Activated CD4-positive, alpha-beta T cell treated with anti-CD3 and anti-CD28 coated beads, Interleukin-2, amount 10 ng/mL, durations not matched to agents 24 days and 14 days (primary cell): ENCODE measurements at regions of chr2 and their contacts with region 1.

Region 1: DNA sequence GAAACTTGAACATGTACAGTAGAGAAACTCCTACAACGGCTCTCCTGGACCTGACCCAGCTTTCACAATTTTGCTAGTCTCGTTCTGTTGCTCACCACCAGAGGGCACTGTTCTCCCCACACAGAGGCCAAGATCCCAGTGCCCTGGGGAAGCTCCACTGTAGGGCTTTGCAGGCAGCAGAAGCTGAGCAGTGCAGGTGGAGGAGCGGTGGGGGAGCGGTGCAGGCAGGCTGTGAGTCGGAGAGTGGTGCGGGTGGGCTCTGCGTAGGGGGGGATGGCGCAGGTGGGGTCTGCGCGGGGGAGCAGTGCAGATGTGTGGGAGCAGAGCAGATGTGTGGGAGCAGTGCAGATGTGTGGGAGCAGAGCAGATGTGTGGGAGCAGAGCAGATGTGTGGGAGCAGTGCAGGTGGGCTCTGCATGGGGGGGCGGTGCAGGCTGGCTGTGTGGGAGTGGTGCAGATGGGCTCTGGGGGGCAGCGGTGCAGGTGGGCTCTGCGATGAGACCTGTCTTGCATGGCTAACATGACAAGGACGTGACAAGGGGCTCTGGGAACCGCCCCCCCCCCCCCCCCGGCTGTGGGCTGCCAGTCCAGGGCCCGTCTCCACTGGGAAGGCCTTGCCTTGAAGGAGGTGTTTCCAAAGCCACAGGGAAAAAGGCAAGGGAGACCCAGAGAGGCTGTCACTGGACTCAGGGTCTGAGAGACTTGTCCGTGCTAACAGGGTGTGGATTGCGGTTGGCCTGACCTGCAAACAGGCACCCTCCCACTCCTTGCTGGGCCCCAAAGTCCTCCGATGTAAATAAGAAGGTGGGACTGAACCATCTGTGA is 7.3 kb downstream of the CYS1 start:
- DNase-seq: peak; percentile 94
- H3K4me3 Mint-ChIP-seq: no peak overlapping the region
- H3K27ac Mint-ChIP-seq: peak overlapping the region; percentile 7
- H3K4me1 Mint-ChIP-seq: peaks cover 7% of the 10 kb centered on the region
- H3K27me3 Mint-ChIP-seq: peaks cover 45% of the 10 kb centered on the region

Region 2: DNA sequence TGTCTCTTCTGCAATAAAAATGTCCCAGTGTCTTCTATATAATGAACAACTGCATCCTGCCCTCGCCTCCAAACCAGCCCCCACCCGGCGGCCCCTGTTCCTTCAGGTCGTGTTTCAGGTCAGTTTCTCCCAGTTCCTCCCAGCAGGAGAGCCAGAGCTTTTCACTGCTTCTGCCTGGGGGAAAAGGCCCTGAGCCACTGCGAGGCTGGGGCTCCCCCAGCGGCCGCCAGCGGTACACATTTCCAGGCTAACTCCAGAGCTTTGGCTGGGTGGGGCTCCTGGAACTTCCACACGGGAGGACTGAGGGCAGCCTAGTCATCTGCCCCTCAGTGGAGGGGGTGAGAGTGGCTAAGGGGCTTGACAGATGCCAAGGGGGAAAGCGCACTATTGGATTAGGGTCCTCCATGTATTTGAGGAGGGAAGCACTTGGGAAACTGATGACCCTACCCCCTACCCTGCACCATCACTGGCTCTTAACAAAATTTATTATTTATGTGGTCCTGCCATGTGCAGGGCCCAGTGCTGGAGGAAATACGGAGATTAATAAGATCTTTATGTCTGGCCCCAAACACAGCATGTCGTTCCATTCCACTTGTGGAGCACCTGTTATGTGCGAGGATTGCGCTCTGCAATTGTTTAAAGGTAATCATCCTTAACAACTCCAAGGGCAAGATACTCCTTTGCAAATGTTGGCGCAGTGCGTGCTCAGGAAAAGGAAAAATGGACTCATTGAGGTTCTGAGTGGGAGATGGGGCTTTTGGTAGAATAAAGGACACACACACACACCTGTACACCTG is 24.7 kb after region 1 on chr2:
- intact Hi-C with region 1: loop called (anchors 1 kb)
- DNase-seq: peak; percentile 81
- H3K4me3 Mint-ChIP-seq: no peak overlapping the region
- H3K27ac Mint-ChIP-seq: no peak overlapping the region
- H3K4me1 Mint-ChIP-seq: peaks cover 7% of the 10 kb centered on the region
- H3K27me3 Mint-ChIP-seq: peaks cover 36% of the 10 kb centered on the region

Region 3: GRCh38 chr2:10382354-10383061 is 309.6 kb after region 1 on chr2:
- intact Hi-C with region 1: no loop called
- DNase-seq: peak; percentile 81
- H3K4me3 Mint-ChIP-seq: peak overlapping the region; percentile 57
- H3K27ac Mint-ChIP-seq: no peak overlapping the region
- H3K4me1 Mint-ChIP-seq: peaks cover 74% of the 10 kb centered on the region
- H3K27me3 Mint-ChIP-seq: no peaks in the 10 kb centered on the region

Region 4: GRCh38 chr2:10434886-10435819 is 362.3 kb after region 1 on chr2:
- intact Hi-C with region 1: loop called (anchors 1 kb)
- DNase-seq: peak; percentile 94
- H3K4me3 Mint-ChIP-seq: peak overlapping the region; percentile 23
- H3K27ac Mint-ChIP-seq: no peak overlapping the region
- H3K4me1 Mint-ChIP-seq: peaks cover 12% of the 10 kb centered on the region
- H3K27me3 Mint-ChIP-seq: peaks cover 4% of the 10 kb centered on the region